ENCODE measurements at regions of chr5 and their contacts with region 1.

Region 1: DNA sequence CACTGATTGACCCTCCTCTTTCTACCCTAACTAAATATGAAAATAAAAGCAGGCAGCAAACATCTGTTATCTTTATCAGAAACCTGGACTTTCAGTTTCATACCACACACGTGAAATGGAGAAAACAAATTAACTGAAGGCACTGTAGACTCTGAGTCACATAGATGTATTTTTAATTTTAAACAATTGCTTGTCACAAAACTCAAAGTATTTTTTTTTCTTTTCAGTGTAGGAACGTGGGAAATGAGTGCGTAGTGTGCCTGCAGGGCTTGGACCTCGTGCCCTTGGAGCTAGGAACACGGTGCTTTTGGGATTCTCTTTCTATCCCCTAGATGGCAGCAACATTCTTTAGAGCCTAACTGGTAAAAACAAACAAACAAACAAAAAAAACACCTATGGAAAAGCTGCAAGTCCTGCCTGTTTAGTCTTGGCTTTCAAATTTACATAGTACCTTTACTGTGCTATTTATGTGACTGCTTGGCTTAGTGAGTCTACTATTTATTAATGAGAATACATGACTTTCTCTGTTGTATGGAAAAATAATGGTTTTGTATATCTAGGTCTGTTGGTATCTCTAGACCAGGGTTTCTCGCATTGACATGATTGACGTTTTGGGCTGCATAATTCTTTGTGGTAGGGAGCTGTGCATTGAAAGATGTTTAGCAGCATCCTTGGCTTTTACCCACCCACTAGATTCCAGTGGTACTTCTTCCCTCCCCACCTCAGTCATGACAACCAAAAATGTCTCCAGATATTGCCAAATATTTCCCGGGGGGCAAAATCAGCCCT is 16.8 kb upstream of the ACTBL2 start:
- DNase-seq: peak in 3 of 10 donors; percentile 28 to 79 (median 71)

Region 2: DNA sequence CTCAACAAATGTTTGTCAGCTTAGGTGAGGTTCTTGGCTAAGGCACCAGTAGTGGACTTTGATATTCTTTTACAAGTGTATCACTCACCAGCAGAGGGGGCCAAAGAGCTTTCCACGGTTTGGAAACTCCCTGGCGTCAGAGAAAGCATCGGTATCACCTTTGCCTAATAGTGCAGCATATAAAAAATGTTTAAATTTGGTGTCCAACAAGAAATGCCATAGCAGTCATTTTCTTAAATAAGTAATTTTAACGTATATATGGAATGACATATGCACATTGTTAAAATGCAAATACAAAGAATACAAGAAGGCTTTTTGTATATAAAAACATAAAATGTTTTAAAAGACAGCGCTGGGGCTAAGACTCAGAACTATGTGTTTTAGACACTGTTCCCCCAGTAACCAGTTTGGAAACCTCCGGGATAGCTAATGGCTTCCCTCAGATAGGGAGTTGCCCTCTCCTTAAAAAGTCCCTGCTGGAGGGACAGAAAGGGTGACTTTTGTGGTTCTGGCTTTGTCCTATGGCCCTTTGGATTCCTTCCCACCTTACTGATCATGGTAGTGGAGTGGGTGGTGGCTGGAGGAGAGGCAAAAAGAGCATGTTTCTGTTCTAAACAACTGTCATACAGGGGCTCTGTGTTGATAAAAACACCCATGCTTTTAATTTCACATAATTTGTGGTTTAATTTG is 201.0 kb before region 1 on chr5:
- intact Hi-C with region 1: loop called (anchors 5 kb)
- DNase-seq: peak; percentile 35 to 94 (median 82)

Region 3: GRCh38 chr5:57327561-57328394 is 171.7 kb before region 1 on chr5:
- intact Hi-C with region 1: no loop called
- DNase-seq: no peak

Region 4: GRCh38 chr5:57432876-57433275 is 66.6 kb before region 1 on chr5:
- intact Hi-C with region 1: no loop called
- DNase-seq: no peak

Region 5: DNA sequence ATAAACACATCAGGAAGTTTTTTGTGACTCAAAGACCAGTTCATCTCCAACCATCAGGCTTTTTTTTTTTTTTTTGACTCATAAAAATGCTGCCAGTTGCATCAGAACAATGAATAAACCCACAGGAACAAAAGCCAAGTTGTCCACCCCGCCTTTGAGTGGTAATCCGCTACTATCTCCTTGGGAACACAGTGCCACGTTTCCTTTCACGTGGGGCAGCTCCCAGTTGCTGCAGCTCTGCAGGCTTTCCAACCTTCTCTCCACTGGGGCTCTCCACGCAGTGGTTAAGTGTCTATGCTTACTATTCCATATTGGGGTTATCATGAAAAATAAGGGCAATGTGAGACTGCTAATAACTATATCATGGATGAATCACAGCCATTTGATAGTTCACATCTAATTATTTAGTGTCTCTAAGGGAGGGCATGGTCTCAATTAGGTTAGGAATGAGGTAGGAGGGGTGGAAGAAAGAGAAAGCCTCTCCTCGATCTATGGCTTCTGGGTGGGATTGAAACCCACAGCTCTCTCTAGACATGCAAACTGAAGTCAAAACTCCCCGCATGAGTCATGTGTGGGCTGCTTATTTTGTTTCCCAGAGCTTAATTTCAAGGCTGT is 39.0 kb after region 1 on chr5:
- intact Hi-C with region 1: no loop called
- DNase-seq: peak in 9 of 10 donors; percentile 33 to 89 (median 49)

Region 6: DNA sequence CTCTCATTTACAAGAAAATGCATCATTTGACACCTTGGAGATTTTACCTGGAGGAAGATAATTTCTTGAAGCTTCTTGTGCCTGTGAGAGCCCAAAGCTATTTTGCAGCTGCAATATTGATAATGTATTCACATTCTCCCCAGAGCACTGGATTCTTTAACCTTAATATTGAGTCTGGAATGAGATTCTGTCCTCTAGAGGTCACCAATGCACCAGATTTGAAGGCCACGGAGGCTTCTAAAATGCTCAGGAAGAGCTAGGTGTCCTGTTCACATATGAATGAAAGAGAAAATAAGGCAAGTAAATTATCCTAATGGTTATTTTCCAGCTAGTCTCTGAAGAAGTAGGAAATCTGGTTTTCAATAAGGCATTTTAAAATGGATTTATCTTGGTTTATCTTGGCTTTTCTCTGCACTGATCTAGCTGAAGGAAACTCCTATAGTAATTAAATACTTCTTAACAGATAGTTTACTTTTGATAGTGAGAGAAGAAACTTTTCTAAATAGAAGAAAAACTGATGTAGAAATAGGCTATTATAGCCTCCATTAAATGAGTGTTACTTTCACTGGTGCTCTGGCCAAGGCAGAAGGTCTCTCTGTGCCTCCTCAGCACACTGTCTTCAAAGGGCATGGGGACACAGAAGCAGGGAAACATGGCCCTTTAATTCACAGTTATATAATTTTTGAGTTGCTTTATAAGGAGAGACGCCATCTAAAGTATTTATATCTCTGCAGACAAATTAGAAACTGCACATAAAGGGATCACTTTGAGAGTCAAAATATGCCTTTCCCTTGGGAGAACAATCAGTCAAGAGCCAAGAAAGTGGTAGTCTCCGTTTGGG is 280.1 kb after region 1 on chr5:
- intact Hi-C with region 1: loop called (anchors 5 kb)
- DNase-seq: peak in 5 of 10 donors; percentile 21 to 81 (median 37)

Region 7: GRCh38 chr5:58080558-58080957 is 581.1 kb after region 1 on chr5:
- intact Hi-C with region 1: loop called (anchors 10 kb)
- DNase-seq: no peak

Region 8: DNA sequence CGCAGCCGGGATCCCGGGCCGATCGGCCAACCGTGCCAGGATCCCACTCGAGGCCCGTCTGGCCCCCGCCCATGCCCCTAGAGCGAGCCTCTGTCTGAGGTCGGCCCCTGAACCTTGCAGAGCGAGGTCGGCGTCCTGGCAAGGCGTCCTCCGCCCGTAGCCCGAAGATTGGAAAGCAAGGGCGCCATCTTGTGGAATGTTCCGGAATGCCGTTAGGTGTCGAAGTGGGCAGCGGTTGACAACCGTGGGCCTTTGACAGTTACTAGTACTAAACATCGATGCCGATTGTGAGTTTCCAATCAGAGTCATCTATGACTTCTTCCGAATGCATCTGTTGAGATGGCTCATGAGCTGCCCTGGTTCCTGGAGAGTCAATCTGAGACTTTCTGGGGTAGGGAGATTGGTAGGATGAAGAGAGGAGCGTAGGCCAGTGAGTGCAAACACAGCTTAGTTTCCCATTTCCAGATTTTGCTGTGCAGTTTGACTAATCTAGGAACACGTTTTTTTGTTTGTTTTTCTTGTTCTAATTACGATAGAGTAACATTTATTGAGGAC is 961.4 kb after region 1 on chr5:
- intact Hi-C with region 1: loop called (anchors 1 kb)
- DNase-seq: peak; percentile 79 to 98 (median 93)